CD4-positive, alpha-beta T cell (primary cell): ENCODE measurements at regions of chr1 and their contacts with region 1.

Region 1: GRCh38 chr1:231626535-231626945 is at the start of gene DISC1:
- DNase-seq: peak; percentile 34 to 87 (median 62)
- ATAC-seq: peak; percentile 70
- H3K4me3 ChIP-seq: peak within 1 kb of the TSS; percentile 99
- H3K4me3 Mint-ChIP-seq: peak within 1 kb of the TSS; percentile 96
- H3K27ac ChIP-seq: peak within 1 kb of the TSS; percentile 68 to 76
- H3K27ac Mint-ChIP-seq: peak within 1 kb of the TSS; percentile 90
- H3K4me1 ChIP-seq: peaks cover 29% of the 10 kb centered on the region
- H3K4me1 Mint-ChIP-seq: peaks cover 33% of the 10 kb centered on the region
- H3K27me3 ChIP-seq: no peaks in the 10 kb centered on the region
- H3K27me3 Mint-ChIP-seq: no peaks in the 10 kb centered on the region
- CTCF ChIP-seq: no peak
- total RNA-seq, gene DISC1: 19.8 to 20.0 TPM

Region 2: DNA sequence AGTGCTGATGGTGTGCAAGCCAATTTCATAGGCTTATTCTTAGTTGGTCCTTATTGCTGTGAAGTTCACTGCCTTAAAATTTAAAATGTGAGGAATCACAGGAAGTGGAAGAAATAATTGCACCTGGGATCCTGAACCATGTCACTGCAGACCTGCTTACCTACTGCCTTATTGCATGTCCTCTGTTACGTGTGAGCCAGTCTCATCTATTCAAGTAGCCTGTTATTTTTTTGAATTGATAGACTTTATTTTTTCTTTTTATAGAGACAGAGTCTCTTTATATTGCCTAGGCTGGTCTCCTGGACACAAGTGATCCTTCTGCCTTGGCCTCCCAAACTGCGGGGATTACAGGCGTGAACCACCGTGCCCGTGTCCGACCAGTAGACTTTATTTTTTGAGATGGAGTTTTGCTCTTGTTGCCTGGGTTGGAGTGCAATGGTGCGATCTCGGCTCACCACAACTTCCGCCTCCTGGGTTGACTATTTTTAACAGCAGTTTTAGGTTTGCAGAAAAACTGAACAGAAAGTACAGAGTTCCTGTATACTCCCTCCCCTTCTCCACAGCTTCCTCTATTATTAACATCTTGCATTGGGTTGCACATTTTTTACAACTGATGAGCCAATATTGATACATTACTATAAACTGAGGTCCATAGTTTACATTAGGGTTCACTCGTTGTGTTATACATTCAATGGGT is 14.0 kb before region 1 on chr1:
- CTCF ChIA-PET with region 1: no interaction called
- POLR2A ChIA-PET with region 1: interaction called, 21 read pairs
- intact Hi-C with region 1: no loop called
- DNase-seq: peak in 12 of 14 experiments; percentile 31 to 87 (median 50)
- ATAC-seq: peak; percentile 97
- H3K4me3 ChIP-seq: peak overlapping the region; percentile 35
- H3K4me3 Mint-ChIP-seq: peak overlapping the region; percentile 72
- H3K27ac ChIP-seq: peak overlapping the region; percentile 39 to 80
- H3K27ac Mint-ChIP-seq: peak overlapping the region; percentile 81
- H3K4me1 ChIP-seq: peaks cover 43% of the 10 kb centered on the region
- H3K4me1 Mint-ChIP-seq: peaks cover 61% of the 10 kb centered on the region
- H3K27me3 ChIP-seq: no peaks in the 10 kb centered on the region
- H3K27me3 Mint-ChIP-seq: no peaks in the 10 kb centered on the region
- CTCF ChIP-seq: no peak